IMR-90 (cell line): ENCODE measurements at regions of chr16 and their contacts with region 1.

Region 1: DNA sequence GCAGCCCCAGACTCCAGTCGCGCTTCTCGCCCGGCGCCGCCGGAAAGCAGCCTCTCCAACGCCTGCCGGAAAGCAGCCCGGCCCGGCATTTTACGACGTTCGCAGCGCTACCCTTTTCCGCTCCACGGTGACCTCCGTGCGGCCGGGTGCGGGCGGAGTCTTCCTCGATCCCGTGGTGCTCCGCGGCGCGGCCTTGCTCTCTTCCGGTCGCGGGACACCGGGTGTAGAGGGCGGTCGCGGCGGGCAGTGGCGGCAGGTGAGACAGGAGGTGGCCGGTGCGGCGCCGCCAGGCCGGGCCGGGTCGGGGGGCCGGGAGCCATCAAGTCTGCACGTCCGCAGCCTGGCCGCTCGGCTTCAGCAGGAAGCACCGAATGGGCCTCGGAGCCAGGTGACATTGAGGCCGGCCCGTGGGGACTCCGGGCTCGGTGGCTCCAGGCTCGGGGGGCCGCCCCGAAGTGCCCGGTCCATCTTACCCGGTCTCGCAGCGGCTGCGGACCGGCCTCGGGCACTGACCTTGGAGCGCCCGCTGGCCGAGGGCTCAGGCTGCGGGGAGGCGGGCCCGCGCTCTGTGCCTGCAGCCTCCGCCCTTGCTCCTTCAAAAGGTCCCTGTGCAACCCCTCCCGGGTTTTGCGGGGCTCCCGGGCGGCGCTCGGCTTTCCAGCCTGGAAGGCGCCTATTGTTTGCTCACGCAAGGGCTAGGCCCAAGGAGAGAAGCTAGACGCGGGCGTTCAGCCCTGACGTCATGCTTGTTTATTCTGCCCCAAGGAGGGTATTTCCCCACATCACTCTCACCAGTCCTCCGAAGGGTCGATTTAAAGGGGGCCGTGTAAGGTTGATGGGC is at the starts of genes COX4I1 and EMC8:
- DNase-seq: peak; percentile 92
- ATAC-seq: peak; percentile 93
- H3K4me3 ChIP-seq: peak within 1 kb of the TSS; percentile 94
- H3K27ac ChIP-seq: peak within 1 kb of the TSS; percentile 74
- H3K4me1 ChIP-seq: peaks cover 2% of the 10 kb centered on the region; the same call in 1 of the 2 replicates
- H3K27me3 ChIP-seq: no peaks in the 10 kb centered on the region
- CTCF ChIP-seq: no peak
- POLR2A ChIP-seq: peak; percentile 83
- RAD21 ChIP-seq: no peak
- total RNA-seq, gene COX4I1: 392 and 397 TPM in 2 replicates
- total RNA-seq, gene EMC8: 23.7 and 28.3 TPM in 2 replicates

Region 2: GRCh38 chr16:85639536-85640253 is 160.0 kb before region 1 on chr16:
- CTCF ChIA-PET with region 1: no interaction called
- POLR2A ChIA-PET with region 1: no interaction called
- dilution Hi-C with region 1: no loop called
- in situ Hi-C with region 1: no loop called
- intact Hi-C with region 1: no loop called
- DNase-seq: no peak
- ATAC-seq: no peak
- H3K4me3 ChIP-seq: no peak overlapping the region
- H3K27ac ChIP-seq: no peak overlapping the region
- H3K4me1 ChIP-seq: peaks cover 2% of the 10 kb centered on the region; the same call in 1 of the 2 replicates
- H3K27me3 ChIP-seq: no peaks in the 10 kb centered on the region
- CTCF ChIP-seq: no peak
- POLR2A ChIP-seq: no peak
- RAD21 ChIP-seq: no peak

Region 3: GRCh38 chr16:85675251-85675927 is 124.3 kb before region 1 on chr16:
- CTCF ChIA-PET with region 1: no interaction called
- POLR2A ChIA-PET with region 1: no interaction called
- dilution Hi-C with region 1: no loop called
- in situ Hi-C with region 1: no loop called
- intact Hi-C with region 1: loop called (anchors 5 kb)
- DNase-seq: peak; percentile 56
- ATAC-seq: peak; percentile 53
- H3K4me3 ChIP-seq: no peak overlapping the region
- H3K27ac ChIP-seq: no peak overlapping the region
- H3K4me1 ChIP-seq: peaks cover 11% of the 10 kb centered on the region
- H3K27me3 ChIP-seq: no peaks in the 10 kb centered on the region
- CTCF ChIP-seq: peak; percentile 57
- POLR2A ChIP-seq: no peak
- RAD21 ChIP-seq: peak; percentile 48

Region 4: GRCh38 chr16:85688586-85689284 is 111.0 kb before region 1 on chr16 and contains the start of gene GINS2:
- CTCF ChIA-PET with region 1: no interaction called
- POLR2A ChIA-PET with region 1: no interaction called
- dilution Hi-C with region 1: no loop called
- in situ Hi-C with region 1: no loop called
- intact Hi-C with region 1: no loop called
- DNase-seq: peak; percentile 84
- ATAC-seq: peak; percentile 100
- H3K4me3 ChIP-seq: peak within 1 kb of the TSS; percentile 87
- H3K27ac ChIP-seq: peak within 1 kb of the TSS; percentile 42; the same call in 1 of the 2 replicates
- H3K4me1 ChIP-seq: no peaks in the 10 kb centered on the region
- H3K27me3 ChIP-seq: peaks cover 14% of the 10 kb centered on the region; the same call in 1 of the 2 replicates
- CTCF ChIP-seq: no peak
- POLR2A ChIP-seq: 0 out of 2 replicates have a peak, but pooled peaks have one; percentile 30
- RAD21 ChIP-seq: no peak
- total RNA-seq, gene GINS2: 12.8 and 13.4 TPM in 2 replicates

Region 5: DNA sequence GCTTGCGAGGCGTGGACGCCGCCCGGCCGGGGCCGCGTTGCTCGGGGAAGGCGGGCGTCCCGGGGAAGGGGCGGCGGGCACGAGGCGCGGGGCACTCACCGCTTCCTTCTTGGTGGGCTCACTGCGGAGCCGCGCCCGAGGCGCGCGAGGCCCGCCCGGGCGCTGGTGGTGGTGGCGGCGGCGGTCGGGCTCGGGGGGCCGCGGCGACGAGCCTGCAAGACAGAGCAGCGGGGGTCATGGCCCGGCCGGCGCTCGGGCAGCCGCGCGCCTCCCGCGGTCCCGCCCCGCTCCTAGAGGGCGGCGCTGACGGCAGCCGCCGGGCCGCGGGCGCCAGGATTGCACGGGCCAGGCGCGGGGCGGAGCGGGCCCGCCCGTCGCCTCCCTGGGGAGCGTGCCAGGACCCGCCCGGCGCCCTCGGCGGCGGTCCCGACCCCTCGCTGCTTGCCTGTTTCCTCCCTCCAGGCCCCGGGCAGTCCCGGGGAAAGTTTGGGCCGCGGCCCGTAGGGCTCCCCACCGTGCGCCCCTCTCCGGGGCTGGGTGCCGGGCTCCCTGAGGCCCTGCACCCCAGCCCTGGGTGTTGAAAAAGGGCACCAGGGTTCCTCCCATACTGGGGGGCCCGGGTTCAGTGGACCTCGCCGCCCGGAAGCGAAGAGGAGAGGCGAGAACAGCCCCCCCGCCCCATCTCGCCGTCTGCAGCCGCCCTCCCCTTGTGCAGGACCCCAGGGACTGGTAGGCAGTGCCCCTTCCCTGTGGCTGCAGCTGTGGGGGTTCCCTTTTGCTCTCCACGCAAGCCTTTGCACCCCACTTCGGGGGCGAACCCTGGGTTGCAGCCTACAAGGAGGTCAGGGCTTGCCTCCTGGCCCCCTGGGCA is 48.7 kb before region 1 on chr16 and contains the start of gene C16orf74:
- CTCF ChIA-PET with region 1: no interaction called
- POLR2A ChIA-PET with region 1: no interaction called
- dilution Hi-C with region 1: no loop called
- in situ Hi-C with region 1: no loop called
- intact Hi-C with region 1: loop called (anchors 5 kb)
- DNase-seq: peak; percentile 35
- ATAC-seq: peak; percentile 87
- H3K4me3 ChIP-seq: peak within 1 kb of the TSS; percentile 46
- H3K27ac ChIP-seq: peak within 1 kb of the TSS; percentile 25
- H3K4me1 ChIP-seq: peaks cover 26% of the 10 kb centered on the region
- H3K27me3 ChIP-seq: no peaks in the 10 kb centered on the region
- CTCF ChIP-seq: no peak
- POLR2A ChIP-seq: no peak; the same call in 1 of the 2 replicates
- RAD21 ChIP-seq: no peak
- total RNA-seq, gene C16orf74: 4.5 and 5.0 TPM in 2 replicates